BJ (cell line): ENCODE measurements at regions of chr7 and their contacts with region 1.

Region 1: DNA sequence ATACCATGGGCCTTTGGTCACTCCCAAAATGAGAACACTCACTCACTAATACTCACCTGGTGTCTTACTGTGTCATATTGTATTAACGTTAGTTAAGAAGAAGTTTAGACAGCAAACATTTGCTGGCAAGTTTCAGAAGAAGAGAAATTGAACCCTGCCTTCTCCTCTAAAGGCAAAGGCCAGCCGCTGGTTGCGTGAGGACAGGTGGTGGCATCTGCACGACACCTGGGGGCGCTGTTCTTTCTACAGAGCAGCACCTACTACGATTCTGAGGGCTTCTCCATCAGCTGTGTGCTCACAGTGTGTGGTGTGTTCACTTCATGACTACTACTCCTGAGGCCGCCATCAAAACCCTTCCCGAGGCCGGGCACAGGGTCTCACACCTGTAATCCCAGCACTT is 17.9 kb upstream of the CLEC2L start:
- DNase-seq: no peak
- H3K4me3 ChIP-seq: no peak overlapping the region
- H3K27me3 ChIP-seq: no peaks in the 10 kb centered on the region
- CTCF ChIP-seq: no peak

Region 2: DNA sequence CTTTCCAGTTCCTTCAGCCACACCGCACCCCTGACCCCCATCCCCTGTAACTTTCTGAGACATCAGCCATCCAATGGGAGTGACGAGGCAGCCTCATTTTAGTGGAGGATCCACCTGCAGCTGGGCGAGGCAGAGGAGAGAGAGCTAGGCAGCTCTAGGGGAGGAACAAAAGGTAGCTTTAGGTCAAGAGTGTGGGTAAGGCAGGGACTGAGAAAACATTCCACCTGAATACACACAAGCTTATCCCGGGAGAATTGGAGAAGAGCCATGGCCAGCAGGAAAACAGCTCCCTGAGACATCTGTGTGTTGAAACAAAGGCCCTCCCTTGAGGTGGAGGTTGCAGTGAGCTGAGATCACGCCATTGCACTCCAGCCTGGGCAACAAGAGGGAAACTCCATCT is 15.4 kb before region 1 on chr7:
- CTCF ChIA-PET with region 1: interaction called, 21 read pairs
- POLR2A ChIA-PET with region 1: no interaction called
- DNase-seq: no peak
- H3K4me3 ChIP-seq: no peak overlapping the region
- H3K27me3 ChIP-seq: peaks cover 13% of the 10 kb centered on the region
- CTCF ChIP-seq: no peak

Region 3: GRCh38 chr7:139660317-139661042 is 154.9 kb after region 1 on chr7:
- CTCF ChIA-PET with region 1: no interaction called
- POLR2A ChIA-PET with region 1: no interaction called
- DNase-seq: no peak
- H3K4me3 ChIP-seq: no peak overlapping the region
- H3K27me3 ChIP-seq: no peaks in the 10 kb centered on the region
- CTCF ChIP-seq: no peak